ENCODE measurements at regions of chr2 and their contacts with region 1.

Region 1: GRCh38 chr2:188695953-188696352 is 278.2 kb upstream of the COL3A1 start:
- DNase-seq: peak; percentile 71
- H3K4me3 Mint-ChIP-seq: no peak overlapping the region
- H3K27ac Mint-ChIP-seq: peak overlapping the region; percentile 69
- H3K4me1 Mint-ChIP-seq: peaks cover 32% of the 10 kb centered on the region
- H3K27me3 Mint-ChIP-seq: no peaks in the 10 kb centered on the region
- CTCF ChIP-seq: no peak

Region 2: GRCh38 chr2:188629689-188630527 is 66.0 kb before region 1 on chr2:
- CTCF ChIA-PET with region 1: no interaction called
- POLR2A ChIA-PET with region 1: no interaction called
- intact Hi-C with region 1: loop called (anchors 5 kb)
- DNase-seq: peak; percentile 32
- H3K4me3 Mint-ChIP-seq: no peak overlapping the region
- H3K27ac Mint-ChIP-seq: peak overlapping the region; percentile 43
- H3K4me1 Mint-ChIP-seq: peaks cover 15% of the 10 kb centered on the region
- H3K27me3 Mint-ChIP-seq: no peaks in the 10 kb centered on the region
- CTCF ChIP-seq: no peak

Measured in MCF 10A (cell line).